ENCODE measurements at regions of chr1 and their contacts with region 1.

Region 1: DNA sequence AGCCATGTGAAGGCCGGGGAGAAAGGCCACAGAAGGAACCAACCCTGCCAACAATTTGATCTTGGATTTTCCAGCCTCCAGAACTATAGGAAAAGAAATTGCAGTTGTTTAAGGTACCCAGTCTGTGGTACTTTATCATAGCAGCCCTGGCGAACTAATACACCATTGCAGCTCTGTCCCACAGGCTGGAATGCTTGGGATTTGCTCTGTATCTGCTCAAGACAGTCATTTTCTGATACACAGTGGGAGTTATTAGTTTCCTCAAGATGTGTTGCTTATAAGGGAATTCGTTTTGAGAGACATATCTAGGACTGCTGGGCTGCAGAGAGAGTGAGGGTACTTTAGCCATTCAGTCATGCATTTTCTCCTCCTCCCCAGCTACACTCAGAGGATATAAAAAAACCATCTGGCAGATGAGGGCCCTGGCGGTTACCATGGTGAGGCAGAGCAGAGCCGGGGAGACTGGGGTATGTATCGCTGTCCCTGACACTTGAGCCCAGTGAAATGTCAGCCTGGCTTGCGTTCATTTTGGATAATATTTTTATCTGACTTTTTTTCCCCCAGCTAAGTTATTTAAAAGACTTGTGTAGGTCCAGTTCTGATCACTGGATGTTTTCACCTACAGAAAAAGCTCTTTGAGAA is 104.6 kb downstream of the DIRAS3 start:
- DNase-seq: peak in 4 of 5 donors; percentile 37 to 64 (median 54)
- ATAC-seq: peak; percentile 82 to 94 (median 90)
- H3K4me3 ChIP-seq: no peak overlapping the region
- H3K27ac ChIP-seq: peak overlapping the region in 7 of 12 donors; percentile 38 to 76 (median 54)
- H3K4me1 ChIP-seq: peaks cover 0 to 24% (median 5%) of the 10 kb centered on the region in 12 donors
- H3K27me3 ChIP-seq: no peaks in the 10 kb centered on the region
- CTCF ChIP-seq: no peak
- POLR2A ChIP-seq: no peak

Region 2: DNA sequence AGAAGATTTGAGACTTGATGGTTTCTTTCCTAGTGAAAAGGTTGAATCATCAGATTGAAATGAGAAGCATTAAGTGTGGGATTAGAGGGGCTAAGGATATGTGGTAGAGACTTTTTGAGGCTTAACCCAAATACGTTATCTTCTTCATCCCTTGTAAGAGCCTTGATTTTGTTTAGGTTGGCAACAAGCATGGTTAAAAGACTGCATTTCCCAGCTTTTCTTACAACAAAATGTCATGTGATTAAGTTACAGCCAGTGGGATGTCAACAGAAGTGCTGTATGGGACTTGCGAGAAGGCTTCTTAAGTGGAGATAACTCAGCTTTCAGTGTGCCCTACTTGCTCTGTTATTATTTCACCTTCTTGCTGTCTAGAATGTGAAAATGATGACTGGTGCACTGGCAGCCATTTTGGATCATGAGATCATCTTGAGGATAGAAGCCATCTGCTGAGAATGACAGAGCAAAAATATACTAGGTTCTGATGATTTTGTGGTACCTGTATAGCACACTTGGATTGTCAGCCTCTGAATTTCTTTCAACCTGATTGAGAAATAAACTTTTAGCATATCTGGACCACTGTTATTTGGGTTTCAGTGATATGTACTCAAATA is 71.2 kb before region 1 on chr1:
- intact Hi-C with region 1: loop called in 1 of 10 experiments (anchors 5 kb)
- DNase-seq: no peak
- ATAC-seq: no peak
- H3K4me3 ChIP-seq: no peak overlapping the region
- H3K27ac ChIP-seq: no peak overlapping the region
- H3K4me1 ChIP-seq: no peaks in the 10 kb centered on the region
- H3K27me3 ChIP-seq: no peaks in the 10 kb centered on the region
- CTCF ChIP-seq: no peak
- POLR2A ChIP-seq: no peak

Region 3: GRCh38 chr1:67983867-67984266 is 38.0 kb after region 1 on chr1:
- intact Hi-C with region 1: loop called in 1 of 10 experiments (anchors 2 kb)
- DNase-seq: peak in 4 of 5 donors; percentile 17 to 46 (median 28)
- ATAC-seq: peak; percentile 83 to 92 (median 90)
- H3K4me3 ChIP-seq: no peak overlapping the region
- H3K27ac ChIP-seq: peak overlapping the region in 4 of 12 donors; percentile 26 to 53 (median 36)
- H3K4me1 ChIP-seq: peaks cover 0 to 10% (median 0%) of the 10 kb centered on the region in 12 donors
- H3K27me3 ChIP-seq: no peaks in the 10 kb centered on the region
- CTCF ChIP-seq: no peak
- POLR2A ChIP-seq: no peak

Region 4: GRCh38 chr1:68093737-68094136 is 147.9 kb after region 1 on chr1:
- intact Hi-C with region 1: no loop called
- DNase-seq: no peak
- ATAC-seq: peak in 3 of 4 donors; percentile 76 to 88 (median 76)
- H3K4me3 ChIP-seq: no peak overlapping the region
- H3K27ac ChIP-seq: no peak overlapping the region
- H3K4me1 ChIP-seq: peaks cover 0 to 6% (median 0%) of the 10 kb centered on the region in 12 donors
- H3K27me3 ChIP-seq: no peaks in the 10 kb centered on the region
- CTCF ChIP-seq: no peak
- POLR2A ChIP-seq: no peak